ENCODE measurements at regions of chr1 and their contacts with region 1.

Region 1: GRCh38 chr1:32335790-32336590 is at the start of gene MARCKSL1:
- DNase-seq: peak; percentile 27 to 94
- H3K4me3 ChIP-seq: peak within 1 kb of the TSS; percentile 92 to 94 (median 93)
- H3K27ac ChIP-seq: peak within 1 kb of the TSS; percentile 92
- H3K4me1 ChIP-seq: peaks cover 5 to 34% (median 25%) of the 10 kb centered on the region in 4 experiments
- H3K27me3 ChIP-seq: peaks cover 0 to 7% (median 2%) of the 10 kb centered on the region in 4 experiments; a peak in 4 of 7 replicates
- CTCF ChIP-seq: no peak
- EP300 ChIP-seq: no peak
- POLR2A ChIP-seq: peak in 1 of 2 experiments; percentile 98; a peak in 2 of 3 replicates
- RAD21 ChIP-seq: no peak
- total RNA-seq, gene MARCKSL1: 536 and 557 TPM in 2 replicates

Region 2: GRCh38 chr1:32179443-32180185 is 156.4 kb before region 1 on chr1 and contains the start of gene TXLNA:
- CTCF ChIA-PET with region 1: no interaction called
- POLR2A ChIA-PET with region 1: interaction called, 10 read pairs
- DNase-seq: peak; percentile 77 to 95
- H3K4me3 ChIP-seq: peak within 1 kb of the TSS; percentile 44 to 89 (median 76)
- H3K27ac ChIP-seq: peak within 1 kb of the TSS; percentile 69; the same call in 1 of the 2 replicates
- H3K4me1 ChIP-seq: peaks cover 8 to 15% (median 10%) of the 10 kb centered on the region in 4 experiments; a peak in 6 of 7 replicates
- H3K27me3 ChIP-seq: no peaks in the 10 kb centered on the region
- CTCF ChIP-seq: no peak
- EP300 ChIP-seq: no peak
- POLR2A ChIP-seq: peak; percentile 58 to 86
- RAD21 ChIP-seq: no peak
- total RNA-seq, gene TXLNA: 45.4 and 46.9 TPM in 2 replicates

Region 3: GRCh38 chr1:32240140-32240951 is 95.6 kb before region 1 on chr1:
- CTCF ChIA-PET with region 1: interaction called, 4 read pairs
- POLR2A ChIA-PET with region 1: interaction called, 73 read pairs
- DNase-seq: peak; percentile 85 to 96
- H3K4me3 ChIP-seq: peak overlapping the region; percentile 65 to 91 (median 68)
- H3K27ac ChIP-seq: peak overlapping the region; percentile 55
- H3K4me1 ChIP-seq: peaks cover 0 to 7% (median 3%) of the 10 kb centered on the region in 4 experiments; a peak in 3 of 7 replicates
- H3K27me3 ChIP-seq: no peaks in the 10 kb centered on the region; a peak in 1 of 7 replicates
- CTCF ChIP-seq: peak in 2 of 3 experiments; percentile 16 to 27; a peak in 3 of 4 replicates
- EP300 ChIP-seq: no peak
- POLR2A ChIP-seq: peak in 1 of 2 experiments; percentile 73; a peak in 2 of 3 replicates
- RAD21 ChIP-seq: peak in 1 of 2 experiments; percentile 13; a peak in 1 of 4 replicates

Region 4: GRCh38 chr1:32273388-32274208 is 62.4 kb before region 1 on chr1:
- CTCF ChIA-PET with region 1: no interaction called
- POLR2A ChIA-PET with region 1: interaction called, 12 read pairs
- DNase-seq: peak; percentile 77
- H3K4me3 ChIP-seq: peak overlapping the region; percentile 30 to 56 (median 38)
- H3K27ac ChIP-seq: no peak overlapping the region
- H3K4me1 ChIP-seq: peaks cover 6 to 33% (median 19%) of the 10 kb centered on the region in 4 experiments
- H3K27me3 ChIP-seq: no peaks in the 10 kb centered on the region
- CTCF ChIP-seq: peak in 1 of 3 experiments; percentile 10; a peak in 1 of 4 replicates
- EP300 ChIP-seq: no peak
- POLR2A ChIP-seq: peak in 1 of 2 experiments; percentile 67; a peak in 2 of 3 replicates
- RAD21 ChIP-seq: no peak

Region 5: DNA sequence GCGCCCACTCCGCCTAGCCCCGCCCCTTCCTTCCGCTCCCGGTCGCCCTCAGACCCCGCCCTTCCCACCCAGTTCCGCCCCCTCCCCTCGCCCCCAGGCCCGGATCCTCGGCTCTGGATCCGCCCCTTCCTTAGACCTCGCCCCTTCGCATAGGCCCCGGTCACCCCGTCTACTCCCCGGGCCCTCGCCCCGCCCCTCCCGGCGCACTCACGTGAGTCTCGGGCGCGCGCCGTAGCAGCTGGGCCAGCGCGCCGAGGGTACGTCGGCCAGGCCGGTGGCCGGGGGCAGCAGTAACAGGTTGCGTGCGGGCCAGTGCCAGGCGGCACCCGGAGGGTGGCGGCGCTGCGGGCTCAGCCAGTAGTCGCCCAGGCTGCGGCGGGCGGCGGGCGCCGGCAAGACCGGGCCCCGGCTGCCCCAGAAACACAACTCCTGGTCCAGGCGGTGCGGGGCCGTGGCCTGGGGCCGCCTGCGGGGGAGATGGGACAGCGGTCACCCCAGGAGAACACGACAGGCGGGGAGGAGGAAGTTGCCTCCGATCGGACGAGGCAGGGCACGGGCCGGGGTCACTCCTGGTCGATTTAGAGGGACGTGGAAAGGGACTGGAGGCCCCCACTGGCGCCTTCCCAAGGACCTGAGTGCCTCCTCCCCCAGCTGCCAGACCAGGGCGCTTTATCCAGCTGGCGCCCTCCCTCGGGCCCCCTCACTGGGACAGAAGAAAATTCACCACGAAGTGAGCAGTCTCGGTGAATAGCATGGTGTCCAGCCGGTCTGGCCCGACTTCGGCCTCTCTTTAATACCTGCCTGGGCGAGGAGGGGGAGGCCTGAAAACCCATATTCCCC is 15.6 kb after region 1 on chr1:
- CTCF ChIA-PET with region 1: interaction called, 14 read pairs
- POLR2A ChIA-PET with region 1: interaction called, 321 read pairs
- DNase-seq: peak; percentile 82 to 97
- H3K4me3 ChIP-seq: peak overlapping the region; percentile 48 to 84 (median 64)
- H3K27ac ChIP-seq: peak overlapping the region; percentile 53; the same call in 1 of the 2 replicates
- H3K4me1 ChIP-seq: peaks cover 0 to 9% (median 3%) of the 10 kb centered on the region in 4 experiments; a peak in 5 of 7 replicates
- H3K27me3 ChIP-seq: peaks cover 2 to 20% (median 12%) of the 10 kb centered on the region in 4 experiments
- CTCF ChIP-seq: no peak
- EP300 ChIP-seq: no peak
- POLR2A ChIP-seq: peak in 1 of 2 experiments; percentile 84; a peak in 2 of 3 replicates
- RAD21 ChIP-seq: peak in 1 of 2 experiments; percentile 13; a peak in 1 of 4 replicates

Region 6: DNA sequence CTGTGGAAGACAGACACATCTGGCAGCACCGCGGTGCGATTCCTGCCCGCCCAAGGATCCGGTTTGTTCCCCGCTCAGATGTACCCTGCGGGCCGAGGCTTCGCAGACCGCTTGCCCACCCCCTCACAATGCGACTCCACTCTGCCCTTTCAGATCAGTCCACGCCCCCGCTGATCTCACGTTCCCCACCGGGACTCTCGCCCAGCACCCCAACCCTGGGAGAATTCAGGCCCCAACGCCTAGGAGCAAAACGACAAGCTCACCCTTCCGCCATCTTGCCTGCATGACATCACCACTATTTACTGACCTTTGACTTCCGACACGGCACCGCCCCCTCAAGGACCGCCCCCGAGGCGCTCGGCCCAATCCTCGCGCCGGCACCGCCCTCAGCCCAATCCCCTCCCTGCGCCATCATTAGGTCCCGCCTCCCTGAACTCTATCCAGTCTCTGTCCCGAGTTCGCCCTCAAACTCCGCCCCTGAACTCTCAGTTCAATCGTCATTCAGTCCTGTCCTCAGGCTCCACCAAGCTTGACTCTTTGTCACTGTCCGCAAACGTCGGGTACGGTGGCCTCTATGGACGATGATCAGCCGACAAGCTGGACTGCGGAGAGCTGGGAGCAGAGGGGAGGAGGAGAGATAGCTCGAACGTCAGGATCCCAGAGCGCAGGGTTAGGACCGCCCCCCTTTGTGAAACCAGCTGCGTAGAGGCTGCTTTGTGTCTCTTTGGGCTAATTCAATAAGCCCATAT is 58.3 kb after region 1 on chr1 and contains the start of gene BSDC1:
- CTCF ChIA-PET with region 1: no interaction called
- POLR2A ChIA-PET with region 1: interaction called, 12 read pairs
- DNase-seq: peak; percentile 97 to 98
- H3K4me3 ChIP-seq: peak within 1 kb of the TSS; percentile 79 to 100 (median 94)
- H3K27ac ChIP-seq: peak within 1 kb of the TSS; percentile 95
- H3K4me1 ChIP-seq: peaks cover 0 to 8% (median 3%) of the 10 kb centered on the region in 4 experiments; a peak in 4 of 7 replicates
- H3K27me3 ChIP-seq: no peaks in the 10 kb centered on the region
- CTCF ChIP-seq: no peak
- EP300 ChIP-seq: no peak
- POLR2A ChIP-seq: peak; percentile 77 to 97
- RAD21 ChIP-seq: no peak
- total RNA-seq, gene BSDC1: 40.7 and 42.9 TPM in 2 replicates

Region 7: DNA sequence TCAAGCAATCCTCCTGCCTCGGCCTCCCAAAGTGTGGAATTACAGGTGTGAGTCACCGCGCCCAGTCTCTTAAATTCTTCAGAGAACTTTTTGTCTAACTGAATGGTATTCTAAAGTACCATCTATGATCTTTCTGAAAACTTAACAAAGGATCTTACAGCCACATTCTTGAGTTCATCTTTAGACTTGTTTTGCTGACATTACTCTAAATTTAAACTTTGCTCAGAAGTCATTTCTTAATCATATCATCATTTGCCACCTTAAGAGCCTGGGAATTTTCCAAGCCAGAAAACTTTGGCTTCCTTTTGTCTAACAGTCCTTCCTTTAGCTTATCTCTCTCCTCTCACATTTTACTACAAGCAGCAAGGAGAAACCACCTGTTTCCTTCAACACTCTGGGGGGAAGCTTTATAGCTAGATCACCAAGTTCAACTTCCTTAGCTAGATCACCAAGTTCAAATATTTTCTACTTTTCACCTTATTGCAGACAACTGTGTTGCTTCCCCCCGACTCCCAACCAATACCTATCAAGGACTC is 197.9 kb after region 1 on chr1:
- CTCF ChIA-PET with region 1: no interaction called
- POLR2A ChIA-PET with region 1: no interaction called
- DNase-seq: no peak
- H3K4me3 ChIP-seq: no peak overlapping the region
- H3K27ac ChIP-seq: no peak overlapping the region
- H3K4me1 ChIP-seq: peaks cover 0 to 2% (median 0%) of the 10 kb centered on the region in 4 experiments; a peak in 1 of 7 replicates
- H3K27me3 ChIP-seq: no peaks in the 10 kb centered on the region
- CTCF ChIP-seq: no peak
- EP300 ChIP-seq: no peak
- POLR2A ChIP-seq: no peak
- RAD21 ChIP-seq: no peak